ENCODE measurements at regions of chr5 and their contacts with region 1.

Region 1: DNA sequence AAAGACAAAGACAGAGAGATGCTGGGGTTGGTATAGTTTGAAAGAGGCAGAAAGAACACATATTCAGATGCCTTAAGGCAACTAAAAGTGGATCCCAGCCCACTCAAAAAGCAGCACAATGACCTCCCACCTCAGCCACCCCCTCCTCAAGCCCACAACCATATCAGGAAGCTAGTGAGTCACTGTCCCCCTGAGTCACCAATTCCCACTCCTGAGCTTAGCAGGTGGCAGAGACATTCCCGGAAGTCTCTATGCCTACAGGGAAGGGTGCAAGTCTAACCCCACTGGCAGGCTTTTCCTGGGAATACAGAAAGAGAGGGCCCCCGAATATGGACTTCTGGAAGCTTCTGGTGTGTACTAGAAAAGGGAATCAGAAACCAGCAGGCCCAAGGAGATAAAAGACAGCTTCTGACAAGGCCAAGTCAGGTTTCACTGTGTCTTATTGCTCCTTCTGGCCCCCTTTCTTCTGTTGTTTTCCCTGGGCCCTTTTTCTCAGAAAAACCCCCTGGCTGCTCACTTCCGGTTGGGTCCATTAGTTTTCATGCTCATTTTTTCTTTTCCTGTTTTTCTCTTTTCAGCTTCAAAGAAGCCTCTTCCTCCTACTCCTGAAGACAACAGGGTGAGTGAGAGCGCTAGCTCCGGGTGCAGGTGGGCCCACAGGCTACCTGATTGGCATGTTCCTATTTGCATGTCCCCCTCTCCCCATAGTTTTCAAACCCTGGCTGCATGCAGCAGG is 36.8 kb downstream of the ITK start:
- DNase-seq: no peak
- H3K4me3 Mint-ChIP-seq: no peak overlapping the region
- H3K27ac Mint-ChIP-seq: no peak overlapping the region
- H3K4me1 Mint-ChIP-seq: peaks cover 16% of the 10 kb centered on the region
- H3K27me3 Mint-ChIP-seq: no peaks in the 10 kb centered on the region
- CTCF ChIP-seq: no peak

Region 2: GRCh38 chr5:156120777-156121176 is 1096.7 kb before region 1 on chr5:
- CTCF ChIA-PET with region 1: interaction called, 12 read pairs
- intact Hi-C with region 1: no loop called
- DNase-seq: no peak
- H3K4me3 Mint-ChIP-seq: no peak overlapping the region
- H3K27ac Mint-ChIP-seq: no peak overlapping the region
- H3K4me1 Mint-ChIP-seq: no peaks in the 10 kb centered on the region
- H3K27me3 Mint-ChIP-seq: no peaks in the 10 kb centered on the region
- CTCF ChIP-seq: no peak